Heart right ventricle (tissue), 16 donors: ENCODE measurements at regions of chr18 and their contacts with region 1.

Region 1: DNA sequence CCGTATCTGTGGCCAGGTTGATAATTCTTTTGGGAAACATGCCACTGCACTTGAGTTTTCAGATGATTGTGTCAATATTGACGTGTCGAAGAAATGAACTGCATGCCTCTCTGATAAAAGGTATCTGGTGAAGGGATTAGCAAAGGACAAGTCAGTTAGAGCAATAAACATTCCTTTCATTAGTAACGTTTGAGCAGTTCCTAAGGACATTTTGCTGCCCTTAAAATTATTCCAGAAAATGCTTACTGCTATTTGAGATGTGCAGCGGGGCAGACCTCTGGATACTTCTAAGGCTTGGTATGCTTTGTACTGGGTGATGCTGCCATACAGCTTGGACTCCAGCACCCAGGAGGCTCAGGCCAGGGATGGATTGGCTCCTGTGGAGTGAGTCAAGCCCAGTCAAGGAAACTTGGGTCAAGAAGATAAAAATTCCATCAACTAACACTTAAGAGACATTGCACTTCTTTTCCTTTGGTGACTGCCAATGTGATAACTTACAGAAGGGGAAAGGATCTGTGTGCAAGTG is 166.7 kb downstream of the FHOD3 start:
- DNase-seq: no peak
- ATAC-seq: peak; percentile 11 to 77 (median 44)
- H3K4me3 ChIP-seq: no peak overlapping the region
- H3K27ac ChIP-seq: peak overlapping the region in 9 of 10 donors; percentile 54 to 97 (median 79)
- H3K4me1 ChIP-seq: peaks cover 0 to 69% (median 40%) of the 10 kb centered on the region in 9 donors
- H3K27me3 ChIP-seq: no peaks in the 10 kb centered on the region
- CTCF ChIP-seq: no peak

Region 2: GRCh38 chr18:36296650-36297416 is 167.4 kb before region 1 on chr18:
- intact Hi-C with region 1: loop called in 4 of 10 experiments (anchors 5 to 10 kb)
- DNase-seq: peak; percentile 52 to 67
- ATAC-seq: peak; percentile 47 to 81 (median 72)
- H3K4me3 ChIP-seq: peak overlapping the region; percentile 54 to 90 (median 78)
- H3K27ac ChIP-seq: peak overlapping the region; percentile 34 to 96 (median 84)
- H3K4me1 ChIP-seq: peaks cover 6 to 42% (median 14%) of the 10 kb centered on the region in 9 donors
- H3K27me3 ChIP-seq: peaks cover 0 to 74% (median 39%) of the 10 kb centered on the region in 7 donors
- CTCF ChIP-seq: peak in 8 of 9 donors; percentile 8 to 60 (median 43)

Region 3: DNA sequence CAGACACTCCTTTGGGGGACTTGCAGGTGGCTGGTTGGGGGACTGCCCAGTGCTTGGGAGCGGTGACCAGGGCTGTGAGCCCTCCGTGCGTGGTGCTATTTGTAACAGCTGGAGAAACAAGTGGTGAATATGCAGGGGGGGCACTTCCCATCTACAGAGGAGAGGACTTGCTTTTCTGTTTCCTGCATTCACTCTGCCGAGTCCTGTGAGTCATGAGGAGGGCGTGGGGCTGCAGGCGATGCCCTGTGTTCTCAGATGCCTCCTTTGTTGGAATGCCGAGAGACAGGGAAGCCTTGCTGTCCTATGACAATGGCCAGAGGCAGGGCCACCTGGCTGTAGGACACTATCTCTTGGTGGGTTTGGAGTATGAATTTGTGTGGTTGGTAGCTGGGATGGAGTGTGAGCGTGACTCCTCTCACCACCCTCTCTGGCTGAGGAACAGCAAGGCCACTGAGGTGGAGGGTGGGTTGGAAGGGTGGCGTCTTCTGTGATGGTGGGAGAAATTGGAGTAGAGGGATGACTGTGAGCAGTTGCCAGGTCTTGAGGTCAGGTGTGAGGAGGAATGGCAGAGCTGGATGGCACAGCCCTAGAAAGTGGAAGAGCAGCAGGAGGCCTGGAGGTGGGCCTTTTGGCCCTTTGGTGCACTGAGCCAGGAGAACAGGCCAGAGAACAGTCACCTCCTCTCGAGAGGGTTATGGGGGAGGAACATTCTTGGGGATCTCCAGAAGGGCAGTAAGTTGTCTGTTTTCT is 142.4 kb before region 1 on chr18:
- intact Hi-C with region 1: loop called in 2 of 10 experiments (anchors 5 to 10 kb)
- DNase-seq: no peak
- ATAC-seq: peak in 7 of 8 donors; percentile 23 to 81 (median 55)
- H3K4me3 ChIP-seq: no peak overlapping the region
- H3K27ac ChIP-seq: peak overlapping the region in 5 of 10 donors; percentile 34 to 58 (median 43)
- H3K4me1 ChIP-seq: peaks cover 4 to 64% (median 31%) of the 10 kb centered on the region in 9 donors
- H3K27me3 ChIP-seq: no peaks in the 10 kb centered on the region
- CTCF ChIP-seq: no peak

Region 4: GRCh38 chr18:36381075-36381474 is 83.1 kb before region 1 on chr18:
- intact Hi-C with region 1: loop called in 1 of 10 experiments (anchors 10 kb)
- DNase-seq: no peak
- ATAC-seq: no peak
- H3K4me3 ChIP-seq: no peak overlapping the region
- H3K27ac ChIP-seq: peak overlapping the region in 9 of 10 donors; percentile 24 to 73 (median 58)
- H3K4me1 ChIP-seq: peaks cover 0 to 84% (median 27%) of the 10 kb centered on the region in 9 donors
- H3K27me3 ChIP-seq: no peaks in the 10 kb centered on the region
- CTCF ChIP-seq: no peak

Region 5: GRCh38 chr18:36402765-36403396 is 61.3 kb before region 1 on chr18:
- intact Hi-C with region 1: loop called in 2 of 10 experiments (anchors 5 to 10 kb)
- DNase-seq: peak; percentile 67 to 77
- ATAC-seq: peak; percentile 52 to 82 (median 72)
- H3K4me3 ChIP-seq: no peak overlapping the region
- H3K27ac ChIP-seq: peak overlapping the region; percentile 46 to 83 (median 79)
- H3K4me1 ChIP-seq: peaks cover 0 to 82% (median 47%) of the 10 kb centered on the region in 9 donors
- H3K27me3 ChIP-seq: no peaks in the 10 kb centered on the region
- CTCF ChIP-seq: peak in 3 of 9 donors; percentile 14 to 34 (median 26)

Region 6: GRCh38 chr18:36628435-36629137 is 164.4 kb after region 1 on chr18:
- intact Hi-C with region 1: loop called in 1 of 10 experiments (anchors 5 kb)
- DNase-seq: no peak
- ATAC-seq: peak; percentile 4 to 50 (median 18)
- H3K4me3 ChIP-seq: no peak overlapping the region
- H3K27ac ChIP-seq: peak overlapping the region; percentile 45 to 90 (median 81)
- H3K4me1 ChIP-seq: peaks cover 2 to 89% (median 47%) of the 10 kb centered on the region in 9 donors
- H3K27me3 ChIP-seq: no peaks in the 10 kb centered on the region
- CTCF ChIP-seq: no peak

Region 7: GRCh38 chr18:36714476-36714875 is 250.3 kb after region 1 on chr18:
- intact Hi-C with region 1: no loop called
- DNase-seq: no peak
- ATAC-seq: no peak
- H3K4me3 ChIP-seq: no peak overlapping the region
- H3K27ac ChIP-seq: no peak overlapping the region
- H3K4me1 ChIP-seq: peaks cover 0 to 48% (median 18%) of the 10 kb centered on the region in 9 donors
- H3K27me3 ChIP-seq: no peaks in the 10 kb centered on the region
- CTCF ChIP-seq: no peak